ENCODE measurements at regions of chr5 and their contacts with region 1.

Region 1: GRCh38 chr5:131769961-131770360 is 26.9 kb downstream of the FNIP1 start:
- DNase-seq: no peak
- ATAC-seq: peak in 1 of 4 donors; percentile 42
- H3K4me3 ChIP-seq: no peak overlapping the region
- H3K27ac ChIP-seq: peak overlapping the region; percentile 28
- H3K4me1 ChIP-seq: peaks cover 71% of the 10 kb centered on the region
- H3K27me3 ChIP-seq: no peaks in the 10 kb centered on the region
- CTCF ChIP-seq: no peak

Region 2: GRCh38 chr5:131758520-131758900 is 11.5 kb before region 1 on chr5:
- intact Hi-C with region 1: loop called in 1 of 2 experiments (anchors 1 kb)
- DNase-seq: no peak
- ATAC-seq: peak; percentile 70 to 91 (median 86)
- H3K4me3 ChIP-seq: peak overlapping the region; percentile 31
- H3K27ac ChIP-seq: peak overlapping the region; percentile 88
- H3K4me1 ChIP-seq: peaks cover 58% of the 10 kb centered on the region
- H3K27me3 ChIP-seq: no peaks in the 10 kb centered on the region
- CTCF ChIP-seq: no peak

Region 3: DNA sequence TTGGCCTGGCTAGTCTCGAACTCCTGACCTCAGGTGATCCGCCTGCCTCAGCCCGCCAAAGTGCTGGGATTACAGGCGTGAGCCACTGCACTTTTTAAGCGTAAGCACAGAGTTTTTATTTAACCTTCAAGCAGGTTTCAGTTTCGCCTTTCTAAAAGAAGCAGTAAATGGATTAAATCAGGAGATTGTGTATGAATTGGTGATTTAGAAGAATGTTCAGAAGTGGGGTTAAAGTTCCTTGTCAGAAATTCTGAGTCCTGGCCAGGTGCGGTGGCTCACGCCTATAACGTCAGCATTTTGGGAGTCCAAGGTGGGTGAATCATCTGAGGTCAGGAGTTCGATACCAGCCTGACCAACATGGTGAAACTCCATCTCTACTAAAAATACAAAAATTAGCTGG is 1294.0 kb after region 1 on chr5:
- intact Hi-C with region 1: loop called in 1 of 2 experiments (anchors 5 kb)
- DNase-seq: no peak
- ATAC-seq: peak in 2 of 4 donors; percentile 47 to 48
- H3K4me3 ChIP-seq: no peak overlapping the region
- H3K27ac ChIP-seq: peak overlapping the region; percentile 42
- H3K4me1 ChIP-seq: peaks cover 40% of the 10 kb centered on the region
- H3K27me3 ChIP-seq: no peaks in the 10 kb centered on the region
- CTCF ChIP-seq: no peak

Measured in psoas muscle (tissue), 8 donors.